ENCODE measurements at regions of chr14 and their contacts with region 1.

Region 1: DNA sequence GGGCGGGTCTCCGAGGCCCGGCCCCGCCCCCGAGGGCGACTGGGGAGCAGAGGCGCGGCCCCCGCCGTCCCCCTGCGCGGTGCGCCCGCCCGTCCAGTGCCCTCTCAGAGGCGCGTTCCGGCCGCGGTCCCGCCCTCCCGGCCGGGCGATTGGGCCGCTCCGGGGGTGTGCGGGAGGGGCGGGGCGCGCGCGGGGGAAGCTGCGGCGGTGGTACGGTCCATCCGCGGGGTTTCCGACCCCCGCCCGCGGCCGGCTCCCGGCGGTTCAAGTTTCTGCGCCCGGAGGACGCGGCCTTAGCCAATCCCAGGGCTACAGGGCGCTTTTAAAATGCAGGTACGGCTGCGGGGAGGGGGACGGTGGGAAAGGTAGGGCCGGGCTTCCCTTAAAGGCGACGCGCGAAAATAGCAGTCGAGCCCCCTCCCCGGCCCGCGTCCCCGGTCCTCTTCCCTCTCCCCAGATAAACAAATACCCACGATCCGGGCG is 317 bp upstream of the CCDC85C start:
- DNase-seq: peak; percentile 93 to 99 (median 97)
- ATAC-seq: peak; percentile 95
- H3K4me3 ChIP-seq: peak overlapping the region; percentile 95
- H3K4me3 Mint-ChIP-seq: peak overlapping the region; percentile 83 to 97 (median 91)
- H3K27ac ChIP-seq: peak overlapping the region; percentile 80
- H3K27ac Mint-ChIP-seq: peak overlapping the region; percentile 62 to 97 (median 86)
- H3K4me1 ChIP-seq: peaks cover 16 to 19% of the 10 kb centered on the region in 2 donors
- H3K4me1 Mint-ChIP-seq: peaks cover 7 to 40% (median 38%) of the 10 kb centered on the region in 7 donors
- H3K27me3 ChIP-seq: no peaks in the 10 kb centered on the region
- H3K27me3 Mint-ChIP-seq: peaks cover 0 to 13% (median 0%) of the 10 kb centered on the region in 5 donors

Region 2: DNA sequence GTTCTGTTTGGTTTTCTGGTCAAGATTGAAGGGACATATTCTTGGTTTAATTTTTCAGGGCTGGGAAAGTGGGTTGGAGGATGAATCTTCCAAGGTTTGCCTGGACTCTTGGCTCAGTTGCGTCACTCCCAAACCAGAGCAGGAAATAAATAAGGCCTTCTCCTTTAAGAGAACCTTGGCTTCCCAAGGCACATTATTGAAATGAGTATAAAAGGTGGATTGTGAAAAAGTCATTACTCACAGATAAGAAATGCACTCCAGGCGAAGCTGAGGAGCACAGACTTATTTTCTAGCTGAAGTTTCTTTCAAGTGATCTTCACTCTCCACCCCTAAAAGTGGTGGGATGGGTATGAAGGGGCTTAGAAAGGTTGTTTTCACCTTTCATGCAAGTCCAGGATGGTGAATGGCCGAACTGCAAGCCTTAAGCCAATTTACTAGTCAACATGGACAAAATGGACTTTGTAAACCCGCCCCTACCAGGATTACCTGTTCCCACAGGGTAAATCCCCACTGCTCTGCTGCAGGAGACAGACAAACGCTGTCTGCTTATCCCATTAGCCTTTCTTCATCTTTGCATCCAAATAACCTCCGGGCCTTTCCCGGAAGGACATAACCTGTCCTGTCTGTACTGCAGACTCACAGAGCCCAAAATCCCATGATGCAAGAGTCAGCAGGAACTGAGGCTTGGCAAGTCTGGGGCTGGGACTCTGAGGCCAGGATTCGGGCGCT is 539.9 kb before region 1 on chr14:
- CTCF ChIA-PET with region 1: no interaction called
- POLR2A ChIA-PET with region 1: no interaction called
- intact Hi-C with region 1: no loop called
- DNase-seq: no peak
- ATAC-seq: no peak
- H3K4me3 ChIP-seq: no peak overlapping the region
- H3K4me3 Mint-ChIP-seq: no peak overlapping the region
- H3K27ac ChIP-seq: no peak overlapping the region
- H3K27ac Mint-ChIP-seq: peak overlapping the region in 2 of 9 donors; percentile 54 to 60
- H3K4me1 ChIP-seq: no peaks in the 10 kb centered on the region
- H3K4me1 Mint-ChIP-seq: peaks cover 0 to 12% (median 0%) of the 10 kb centered on the region in 7 donors
- H3K27me3 ChIP-seq: no peaks in the 10 kb centered on the region
- H3K27me3 Mint-ChIP-seq: peaks cover 0 to 2% (median 0%) of the 10 kb centered on the region in 5 donors

Region 3: GRCh38 chr14:99480917-99481744 is 123.2 kb before region 1 on chr14 and contains the start of gene CCNK:
- CTCF ChIA-PET with region 1: interaction called, 4 read pairs
- POLR2A ChIA-PET with region 1: interaction called, 38 read pairs
- intact Hi-C with region 1: loop called (anchors 1 kb)
- DNase-seq: peak; percentile 98 to 100 (median 100)
- ATAC-seq: peak; percentile 92
- H3K4me3 ChIP-seq: peak within 1 kb of the TSS; percentile 86
- H3K4me3 Mint-ChIP-seq: peak within 1 kb of the TSS; percentile 89 to 100 (median 98)
- H3K27ac ChIP-seq: peak within 1 kb of the TSS; percentile 93
- H3K27ac Mint-ChIP-seq: peak within 1 kb of the TSS; percentile 95 to 99 (median 98)
- H3K4me1 ChIP-seq: peaks cover 26 to 34% of the 10 kb centered on the region in 2 donors
- H3K4me1 Mint-ChIP-seq: peaks cover 44 to 79% (median 70%) of the 10 kb centered on the region in 7 donors
- H3K27me3 ChIP-seq: no peaks in the 10 kb centered on the region
- H3K27me3 Mint-ChIP-seq: no peaks in the 10 kb centered on the region
- total RNA-seq, gene CCNK: 68.4 to 139 (median 81.9) TPM

Region 4: DNA sequence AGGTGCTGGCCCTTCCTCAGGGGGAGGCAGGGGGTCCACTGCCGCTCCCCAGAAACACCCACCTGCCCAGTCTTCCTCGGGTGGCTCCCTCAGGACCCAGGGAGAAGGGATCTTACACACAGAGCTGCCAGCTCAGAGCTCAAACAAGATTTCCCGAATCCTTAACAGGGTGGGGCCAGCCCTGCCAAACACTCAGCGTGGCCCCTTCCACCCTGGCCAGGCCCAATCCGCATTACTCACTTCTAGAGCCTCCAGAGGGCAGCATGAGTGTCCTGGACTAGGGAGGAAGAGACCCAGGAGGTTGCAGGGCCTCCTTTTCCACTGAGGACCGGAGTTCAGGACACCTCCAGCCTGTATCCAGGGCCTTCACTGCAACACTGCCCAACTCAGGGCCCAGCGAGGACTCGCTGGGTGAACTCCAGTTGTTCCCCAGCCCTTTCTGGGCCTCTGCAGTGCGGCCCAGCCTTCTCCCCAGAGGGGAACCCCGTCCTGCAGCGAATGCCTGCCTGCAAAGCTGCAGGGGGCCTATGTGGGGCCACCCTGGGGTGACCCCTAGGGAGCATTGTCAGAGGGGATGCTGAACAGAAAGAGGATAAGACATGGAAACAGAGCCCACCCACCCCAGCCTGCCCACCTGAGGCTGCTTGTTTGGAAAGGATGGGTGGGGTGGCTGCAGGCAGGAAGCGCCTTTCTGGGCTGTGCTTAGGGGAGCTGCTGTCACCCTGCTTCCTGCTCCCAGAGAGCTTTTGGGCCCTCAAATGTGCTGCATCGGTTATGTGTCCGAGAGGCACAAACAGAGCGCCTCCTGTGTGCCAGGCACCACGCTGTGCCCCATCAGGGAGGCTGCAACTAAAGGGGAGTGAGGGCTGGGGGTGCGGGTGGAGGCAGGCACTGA is 79.3 kb before region 1 on chr14:
- CTCF ChIA-PET with region 1: interaction called, 7 read pairs
- POLR2A ChIA-PET with region 1: interaction called, 17 read pairs
- intact Hi-C with region 1: loop called in 1 of 2 experiments (anchors 1 kb)
- DNase-seq: peak in 6 of 9 donors; percentile 16 to 49 (median 41)
- ATAC-seq: peak; percentile 35
- H3K4me3 ChIP-seq: no peak overlapping the region
- H3K4me3 Mint-ChIP-seq: peak overlapping the region in 9 of 10 donors; percentile 69 to 84 (median 76)
- H3K27ac ChIP-seq: peak overlapping the region; percentile 66
- H3K27ac Mint-ChIP-seq: peak overlapping the region; percentile 82 to 99 (median 93)
- H3K4me1 ChIP-seq: peaks cover 0 to 23% of the 10 kb centered on the region in 2 donors
- H3K4me1 Mint-ChIP-seq: peaks cover 5 to 23% (median 15%) of the 10 kb centered on the region in 7 donors
- H3K27me3 ChIP-seq: no peaks in the 10 kb centered on the region
- H3K27me3 Mint-ChIP-seq: no peaks in the 10 kb centered on the region

Region 5: GRCh38 chr14:99683619-99684355 is 79.5 kb after region 1 on chr14 and contains the start of gene CYP46A1:
- CTCF ChIA-PET with region 1: interaction called, 5 read pairs
- POLR2A ChIA-PET with region 1: no interaction called
- intact Hi-C with region 1: loop called (anchors 1 kb)
- DNase-seq: peak; percentile 97 to 99 (median 99)
- ATAC-seq: peak; percentile 98
- H3K4me3 ChIP-seq: peak within 1 kb of the TSS; percentile 93
- H3K4me3 Mint-ChIP-seq: peak within 1 kb of the TSS; percentile 79 to 96 (median 92)
- H3K27ac ChIP-seq: peak within 1 kb of the TSS; percentile 75
- H3K27ac Mint-ChIP-seq: peak within 1 kb of the TSS; percentile 52 to 94 (median 83)
- H3K4me1 ChIP-seq: peaks cover 5 to 12% of the 10 kb centered on the region in 2 donors
- H3K4me1 Mint-ChIP-seq: peaks cover 2 to 29% (median 11%) of the 10 kb centered on the region in 7 donors
- H3K27me3 ChIP-seq: no peaks in the 10 kb centered on the region
- H3K27me3 Mint-ChIP-seq: peaks cover 2 to 34% (median 32%) of the 10 kb centered on the region in 5 donors
- total RNA-seq, gene CYP46A1: 0.13 to 0.34 (median 0.32) TPM in 4 of 5 experiments, not detected in the other

Region 6: DNA sequence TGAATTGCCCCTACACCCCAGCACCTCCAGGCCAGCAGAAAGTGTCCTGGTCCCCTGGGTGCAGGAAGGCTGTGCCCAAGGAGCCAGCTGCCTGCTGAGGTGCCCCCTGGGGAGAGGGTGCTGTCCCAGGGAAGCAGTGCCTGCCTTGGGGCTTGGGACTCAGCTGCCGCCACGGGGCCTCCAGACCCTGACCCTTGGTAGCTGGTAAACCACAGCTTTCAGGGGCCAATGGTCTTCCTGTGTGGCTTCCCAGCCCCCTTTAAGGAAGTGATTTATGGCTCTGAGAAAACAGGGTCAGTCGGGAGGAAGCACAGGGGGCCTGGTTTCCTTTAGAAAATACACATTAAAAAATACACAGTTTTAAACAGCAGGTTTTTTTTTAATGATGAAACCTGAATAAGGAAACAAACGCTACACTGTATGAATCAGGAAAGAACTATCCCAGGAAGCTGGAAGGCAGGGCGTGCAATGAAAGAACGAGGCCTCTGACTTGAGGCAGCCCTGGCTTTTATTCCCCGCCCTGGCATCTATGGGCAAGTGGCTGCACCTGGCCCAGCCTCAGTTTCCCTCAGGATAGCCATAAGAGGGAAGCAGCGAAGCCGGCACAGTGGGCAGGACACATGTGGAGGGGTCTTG is 148.3 kb after region 1 on chr14:
- CTCF ChIA-PET with region 1: no interaction called
- POLR2A ChIA-PET with region 1: no interaction called
- intact Hi-C with region 1: no loop called
- DNase-seq: no peak
- ATAC-seq: no peak
- H3K4me3 ChIP-seq: no peak overlapping the region
- H3K4me3 Mint-ChIP-seq: no peak overlapping the region
- H3K27ac ChIP-seq: no peak overlapping the region
- H3K27ac Mint-ChIP-seq: no peak overlapping the region
- H3K4me1 ChIP-seq: peaks cover 0 to 4% of the 10 kb centered on the region in 2 donors
- H3K4me1 Mint-ChIP-seq: peaks cover 3 to 23% (median 18%) of the 10 kb centered on the region in 7 donors
- H3K27me3 ChIP-seq: peaks cover 0 to 14% of the 10 kb centered on the region in 2 donors
- H3K27me3 Mint-ChIP-seq: peaks cover 21 to 43% (median 37%) of the 10 kb centered on the region in 5 donors

Region 7: GRCh38 chr14:99918781-99919180 is 314.5 kb after region 1 on chr14:
- CTCF ChIA-PET with region 1: no interaction called
- POLR2A ChIA-PET with region 1: no interaction called
- intact Hi-C with region 1: no loop called
- DNase-seq: no peak
- ATAC-seq: no peak
- H3K4me3 ChIP-seq: no peak overlapping the region
- H3K4me3 Mint-ChIP-seq: no peak overlapping the region
- H3K27ac ChIP-seq: no peak overlapping the region
- H3K27ac Mint-ChIP-seq: no peak overlapping the region
- H3K4me1 ChIP-seq: no peaks in the 10 kb centered on the region
- H3K4me1 Mint-ChIP-seq: peaks cover 0 to 3% (median 0%) of the 10 kb centered on the region in 7 donors
- H3K27me3 ChIP-seq: no peaks in the 10 kb centered on the region
- H3K27me3 Mint-ChIP-seq: peaks cover 0 to 11% (median 0%) of the 10 kb centered on the region in 5 donors

Region 8: DNA sequence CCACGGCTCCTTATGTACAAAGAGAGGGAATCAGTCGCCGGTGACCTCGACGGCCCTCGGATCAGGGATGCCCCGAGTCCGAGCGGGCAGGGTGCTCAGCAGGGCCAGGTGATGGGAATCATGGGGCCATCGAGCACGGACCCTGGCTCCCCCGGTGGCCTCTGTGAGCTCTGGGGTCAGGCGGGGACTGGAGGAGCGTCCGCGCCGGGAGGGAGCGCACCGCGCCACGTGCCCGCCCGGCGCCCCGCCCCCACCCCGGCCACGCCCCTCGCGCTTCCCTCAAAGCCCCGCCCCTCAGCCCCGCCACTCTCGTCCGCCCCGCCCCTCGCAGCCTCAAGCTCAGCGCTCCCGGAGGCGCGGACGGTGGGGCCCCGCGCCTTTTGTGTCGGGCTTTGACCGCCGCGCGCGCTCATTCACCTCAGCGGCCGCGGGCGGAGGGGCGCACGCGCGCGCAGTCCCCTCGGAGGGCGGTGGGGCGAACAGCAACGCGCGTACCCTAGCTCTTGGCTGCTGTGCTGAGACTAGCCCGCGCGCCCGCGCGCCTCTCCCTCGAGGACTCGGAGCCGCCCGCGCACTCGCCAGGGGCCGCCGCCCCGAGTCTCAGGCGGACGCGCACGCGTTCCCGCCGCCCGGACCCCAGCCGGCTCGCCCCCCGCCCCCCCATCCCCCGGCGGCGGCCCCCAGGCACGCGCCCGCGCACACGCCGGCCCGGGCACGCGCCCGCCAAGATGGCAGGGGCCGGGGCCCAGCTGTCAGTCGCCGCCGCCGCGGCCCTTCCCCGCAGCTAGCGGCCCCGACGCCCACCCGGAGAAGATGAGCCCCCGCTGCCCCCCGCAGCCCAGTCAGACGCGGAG is 367.0 kb after region 1 on chr14:
- CTCF ChIA-PET with region 1: no interaction called
- POLR2A ChIA-PET with region 1: no interaction called
- intact Hi-C with region 1: loop called in 1 of 2 experiments (anchors 1 kb)
- DNase-seq: peak; percentile 69 to 87 (median 81)
- ATAC-seq: peak; percentile 95
- H3K4me3 ChIP-seq: peak overlapping the region; percentile 53
- H3K4me3 Mint-ChIP-seq: peak overlapping the region; percentile 43 to 93 (median 76)
- H3K27ac ChIP-seq: peak overlapping the region; percentile 58
- H3K27ac Mint-ChIP-seq: peak overlapping the region in 4 of 9 donors; percentile 21 to 87 (median 48)
- H3K4me1 ChIP-seq: no peaks in the 10 kb centered on the region
- H3K4me1 Mint-ChIP-seq: peaks cover 7 to 21% (median 15%) of the 10 kb centered on the region in 7 donors
- H3K27me3 ChIP-seq: no peaks in the 10 kb centered on the region
- H3K27me3 Mint-ChIP-seq: peaks cover 0 to 33% (median 7%) of the 10 kb centered on the region in 5 donors

Region 9: GRCh38 chr14:100547633-100548294 is 943.4 kb after region 1 on chr14:
- CTCF ChIA-PET with region 1: no interaction called
- POLR2A ChIA-PET with region 1: no interaction called
- intact Hi-C with region 1: loop called in 1 of 2 experiments (anchors 10 kb)
- DNase-seq: peak in 6 of 9 donors; percentile 43 to 90 (median 79)
- ATAC-seq: peak; percentile 76
- H3K4me3 ChIP-seq: peak overlapping the region; percentile 50
- H3K4me3 Mint-ChIP-seq: peak overlapping the region; percentile 51 to 87 (median 82)
- H3K27ac ChIP-seq: peak overlapping the region; percentile 73
- H3K27ac Mint-ChIP-seq: peak overlapping the region; percentile 58 to 98 (median 89)
- H3K4me1 ChIP-seq: peaks cover 27 to 28% of the 10 kb centered on the region in 2 donors
- H3K4me1 Mint-ChIP-seq: peaks cover 9 to 38% (median 22%) of the 10 kb centered on the region in 7 donors
- H3K27me3 ChIP-seq: no peaks in the 10 kb centered on the region
- H3K27me3 Mint-ChIP-seq: no peaks in the 10 kb centered on the region